HEK293 (cell line): ENCODE measurements at regions of chr6 and their contacts with region 1.

Region 1: DNA sequence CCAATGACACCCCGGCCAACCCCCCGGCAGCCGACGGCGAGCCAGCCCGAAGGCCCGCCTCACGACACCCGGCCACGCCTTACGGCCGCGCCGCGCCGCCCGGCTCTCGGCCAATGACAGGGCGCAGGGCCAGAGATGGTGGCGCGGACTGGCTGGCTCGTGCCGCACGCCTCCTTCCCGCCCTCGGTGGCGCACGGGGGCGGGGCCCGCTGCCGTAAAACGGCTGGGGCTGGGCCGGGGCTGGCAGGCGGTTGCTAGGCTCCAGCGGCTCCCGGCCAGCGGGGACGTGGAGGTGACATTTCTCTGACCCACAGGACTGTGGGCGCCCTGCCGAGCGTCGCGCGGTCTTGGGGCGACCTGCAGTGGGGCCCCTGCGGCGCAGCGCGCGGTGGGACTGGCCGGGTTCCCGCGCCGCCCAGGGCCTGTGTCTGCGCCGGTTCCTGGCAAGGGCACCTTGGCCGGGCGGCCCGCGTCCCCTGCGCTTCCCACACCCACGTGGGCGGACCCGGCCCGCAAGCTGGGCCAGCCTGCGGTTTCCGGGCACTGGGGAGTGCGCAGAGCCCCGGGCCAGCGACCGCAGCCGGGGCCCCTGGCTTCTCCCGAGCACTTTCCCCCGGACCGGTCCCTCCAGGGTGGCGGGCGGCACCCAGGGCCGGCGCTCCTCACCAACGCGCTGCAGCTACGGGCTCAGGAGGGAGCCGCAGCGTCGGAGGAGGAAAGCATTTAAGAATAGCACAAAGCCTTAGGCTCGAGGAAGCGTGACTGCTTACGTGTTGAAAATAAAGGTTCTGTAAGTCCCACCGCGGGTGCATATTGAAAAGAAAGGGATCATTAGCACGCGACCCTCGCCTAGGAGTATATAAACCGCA is at the start of gene MPC1:
- H3K4me3 ChIP-seq: peak within 1 kb of the TSS; percentile 82
- H3K27ac ChIP-seq: peak within 1 kb of the TSS; percentile 69
- H3K4me1 ChIP-seq: 0 out of 2 replicates have a peak, but pooled peaks cover 3% of the 10 kb centered on the region
- CTCF ChIP-seq: no peak

Region 2: DNA sequence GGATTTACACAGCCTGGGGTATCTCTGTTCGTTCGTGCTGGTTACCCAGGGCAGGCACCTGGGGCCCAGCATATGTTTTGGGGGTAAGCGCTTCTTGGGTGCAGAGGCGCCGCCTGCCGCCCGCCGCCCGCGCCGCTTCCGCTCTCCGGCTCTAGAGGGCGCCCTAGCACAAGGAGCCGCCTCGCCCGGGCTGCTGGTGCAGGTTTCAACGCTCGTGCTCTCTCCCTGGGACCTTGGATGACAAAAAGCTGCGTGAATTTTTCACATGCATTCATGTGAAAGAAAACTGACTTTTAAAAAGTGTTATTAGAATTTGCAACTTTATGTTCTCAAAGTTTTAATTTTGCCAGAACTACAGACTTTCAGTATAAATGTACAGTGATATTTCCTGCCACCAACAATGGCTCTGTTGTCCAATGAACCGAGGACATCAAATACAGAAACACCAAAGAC is 107.4 kb before region 1 on chr6:
- CTCF ChIA-PET with region 1: interaction called, 17 read pairs
- POLR2A ChIA-PET with region 1: no interaction called
- H3K4me3 ChIP-seq: no peak overlapping the region
- H3K27ac ChIP-seq: no peak overlapping the region
- H3K4me1 ChIP-seq: no peaks in the 10 kb centered on the region
- CTCF ChIP-seq: peak; percentile 94

Region 3: GRCh38 chr6:166366921-166367320 is 16.2 kb before region 1 on chr6:
- CTCF ChIA-PET with region 1: interaction called, 15 read pairs
- POLR2A ChIA-PET with region 1: interaction called, 3 read pairs
- H3K4me3 ChIP-seq: no peak overlapping the region
- H3K27ac ChIP-seq: no peak overlapping the region
- H3K4me1 ChIP-seq: no peaks in the 10 kb centered on the region
- CTCF ChIP-seq: no peak